HEK293 (cell line): ENCODE measurements at regions of chr7 and their contacts with region 1.

Region 1: GRCh38 chr7:2632733-2633537 is 1.1 kb downstream of the TTYH3 start:
- H3K4me3 ChIP-seq: peak overlapping the region; percentile 85
- H3K27ac ChIP-seq: peak overlapping the region; percentile 75
- H3K4me1 ChIP-seq: peaks cover 8% of the 10 kb centered on the region; the same call in 1 of the 2 replicates
- CTCF ChIP-seq: no peak

Region 2: GRCh38 chr7:2555121-2556052 is 77.5 kb before region 1 on chr7 and contains the start of gene BRAT1:
- CTCF ChIA-PET with region 1: no interaction called
- POLR2A ChIA-PET with region 1: interaction called, 15 read pairs
- H3K4me3 ChIP-seq: peak within 1 kb of the TSS; percentile 88
- H3K27ac ChIP-seq: peak within 1 kb of the TSS; percentile 100
- H3K4me1 ChIP-seq: peaks cover 2% of the 10 kb centered on the region; the same call in 1 of the 2 replicates
- CTCF ChIP-seq: peak; percentile 6; the same call in 1 of the 2 replicates

Region 3: DNA sequence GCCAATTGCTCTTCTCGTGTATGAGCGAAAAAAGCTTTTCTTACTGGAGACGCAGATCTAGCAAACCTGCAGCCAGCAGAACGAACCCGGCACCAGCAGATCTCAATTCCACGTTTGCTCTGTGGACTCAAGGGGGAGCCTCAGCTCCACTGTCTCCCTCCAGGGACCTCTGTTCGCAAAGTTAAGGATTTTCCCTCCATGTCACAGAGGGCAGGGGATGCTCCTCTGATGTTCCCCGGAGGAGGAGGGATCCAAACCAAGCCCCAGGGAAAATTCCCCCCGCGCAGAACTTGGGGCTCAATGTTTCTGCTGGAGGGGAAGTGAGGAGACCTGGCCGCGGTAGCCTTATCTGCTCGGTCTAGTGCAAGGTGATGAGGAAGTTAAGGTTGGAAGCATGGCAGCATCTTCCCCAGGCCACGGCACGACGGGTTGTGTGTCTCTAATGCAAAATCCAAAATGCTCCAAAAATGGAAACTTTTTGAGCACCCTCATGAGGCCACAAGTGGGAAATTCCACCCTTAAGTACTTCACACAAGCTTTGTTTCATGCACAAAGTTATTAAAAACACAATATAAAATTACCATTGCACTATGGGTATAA is 65.2 kb before region 1 on chr7:
- CTCF ChIA-PET with region 1: no interaction called
- POLR2A ChIA-PET with region 1: no interaction called
- H3K4me3 ChIP-seq: no peak overlapping the region
- H3K27ac ChIP-seq: no peak overlapping the region
- H3K4me1 ChIP-seq: no peaks in the 10 kb centered on the region
- CTCF ChIP-seq: no peak

Region 4: DNA sequence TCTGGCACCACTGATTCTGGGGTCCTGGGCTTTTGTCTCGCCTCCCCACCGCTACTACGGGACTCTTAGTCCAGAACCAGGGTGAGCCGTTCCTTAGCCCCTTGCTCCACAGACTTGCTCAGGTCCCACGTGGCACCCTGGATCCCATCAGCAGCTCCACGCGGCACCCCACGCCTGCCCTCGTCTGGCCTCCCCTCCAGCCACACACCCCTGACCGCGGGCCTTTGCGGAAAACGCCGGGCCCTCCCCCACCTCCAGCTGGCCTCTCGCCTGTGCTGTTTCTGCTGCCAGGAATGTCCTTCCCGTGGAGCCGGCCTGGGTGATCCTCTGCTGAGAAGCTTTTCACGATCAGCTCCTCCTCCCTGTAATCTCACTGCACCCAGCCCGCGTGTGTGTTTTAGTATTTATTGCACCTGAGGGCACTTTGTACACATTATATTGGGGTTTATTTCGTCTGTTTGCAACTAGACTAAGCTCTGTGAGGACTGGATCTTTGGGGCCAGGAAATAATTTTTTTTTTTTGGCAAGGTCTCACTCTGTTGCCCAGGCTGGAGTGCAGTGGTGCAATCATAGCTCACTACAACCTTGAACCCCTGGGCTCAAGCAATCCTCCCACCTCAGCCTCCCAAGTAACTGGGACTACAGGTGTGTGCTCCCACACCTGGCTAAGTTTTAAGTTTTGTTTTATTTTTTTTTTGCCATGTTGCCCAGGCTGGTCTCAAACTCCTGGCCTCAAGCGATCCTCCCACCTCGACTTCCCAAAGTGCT is 11.7 kb before region 1 on chr7:
- CTCF ChIA-PET with region 1: no interaction called
- POLR2A ChIA-PET with region 1: interaction called, 12 read pairs
- H3K4me3 ChIP-seq: no peak overlapping the region
- H3K27ac ChIP-seq: no peak overlapping the region
- H3K4me1 ChIP-seq: no peaks in the 10 kb centered on the region
- CTCF ChIP-seq: no peak

Region 5: GRCh38 chr7:3628625-3629024 is 995.7 kb after region 1 on chr7:
- CTCF ChIA-PET with region 1: no interaction called
- POLR2A ChIA-PET with region 1: no interaction called
- H3K4me3 ChIP-seq: no peak overlapping the region
- H3K27ac ChIP-seq: no peak overlapping the region
- H3K4me1 ChIP-seq: no peaks in the 10 kb centered on the region; the same call in 1 of the 2 replicates
- CTCF ChIP-seq: no peak